K562 (cell line): ENCODE measurements at regions of chr5 and their contacts with region 1.

Region 1: GRCh38 chr5:32613050-32613672 is 27.8 kb downstream of the SUB1 start:
- DNase-seq: peak; percentile 80 to 88 (median 83)
- ATAC-seq: peak; percentile 89
- H3K4me3 ChIP-seq: no peak overlapping the region
- H3K27ac ChIP-seq: no peak overlapping the region
- H3K4me1 ChIP-seq: no peaks in the 10 kb centered on the region
- H3K27me3 ChIP-seq: no peaks in the 10 kb centered on the region; a peak in 1 of 5 replicates
- CTCF ChIP-seq: peak; percentile 91 to 97 (median 93)
- EP300 ChIP-seq: no peak
- POLR2A ChIP-seq: no peak
- RAD21 ChIP-seq: peak; percentile 94 to 95

Region 2: DNA sequence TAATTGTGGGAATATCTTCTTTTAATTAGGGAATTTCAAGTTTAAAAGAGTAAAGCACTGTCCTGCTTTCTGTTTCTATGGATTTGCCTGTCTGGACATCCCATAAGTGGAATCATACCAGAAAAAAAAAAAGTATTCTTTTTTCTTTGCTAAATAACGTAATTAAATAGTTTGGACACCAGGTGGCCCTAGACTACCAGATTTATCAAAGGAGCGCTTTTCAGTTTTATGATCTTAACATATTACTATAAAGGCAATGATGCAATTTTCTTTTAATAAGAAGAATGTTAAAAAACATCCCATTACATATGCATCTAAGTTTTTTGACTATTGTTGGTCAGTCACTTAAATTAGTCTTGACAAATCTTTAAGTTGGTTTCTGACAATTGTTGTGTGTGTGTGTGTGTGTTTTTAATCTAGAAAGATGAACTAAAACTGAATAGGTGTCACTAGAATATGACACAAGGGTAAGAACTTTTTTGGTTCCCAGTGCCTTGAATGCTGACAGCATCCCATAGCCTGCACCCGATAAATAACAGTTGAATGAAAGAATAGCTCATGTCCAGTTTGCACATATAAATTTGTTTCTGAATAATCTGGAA is 1031.6 kb before region 1 on chr5:
- CTCF ChIA-PET with region 1: interaction called, 3 read pairs
- POLR2A ChIA-PET with region 1: no interaction called
- in situ Hi-C with region 1: loop called (anchors 25 kb)
- intact Hi-C with region 1: no loop called
- DNase-seq: peak in 3 of 4 experiments; percentile 31 to 52 (median 33)
- ATAC-seq: peak; percentile 51; the same call in 1 of the 3 replicates
- H3K4me3 ChIP-seq: no peak overlapping the region
- H3K27ac ChIP-seq: no peak overlapping the region
- H3K4me1 ChIP-seq: no peaks in the 10 kb centered on the region
- H3K27me3 ChIP-seq: peaks cover 0 to 5% of the 10 kb centered on the region in 2 experiments; a peak in 2 of 5 replicates
- CTCF ChIP-seq: peak; percentile 20 to 79 (median 51); a peak in 3 of 6 replicates
- EP300 ChIP-seq: no peak
- POLR2A ChIP-seq: no peak
- RAD21 ChIP-seq: peak; percentile 83 to 87

Region 3: GRCh38 chr5:31825518-31826068 is 787.6 kb before region 1 on chr5:
- CTCF ChIA-PET with region 1: interaction called, 6 read pairs
- POLR2A ChIA-PET with region 1: no interaction called
- in situ Hi-C with region 1: no loop called
- intact Hi-C with region 1: loop called (anchors 10 kb)
- DNase-seq: peak in 3 of 4 experiments; percentile 22 to 63 (median 30)
- ATAC-seq: peak; percentile 94
- H3K4me3 ChIP-seq: no peak overlapping the region
- H3K27ac ChIP-seq: no peak overlapping the region
- H3K4me1 ChIP-seq: no peaks in the 10 kb centered on the region
- H3K27me3 ChIP-seq: no peaks in the 10 kb centered on the region; a peak in 1 of 5 replicates
- CTCF ChIP-seq: peak; percentile 51 to 81 (median 68); a peak in 5 of 6 replicates
- EP300 ChIP-seq: no peak
- POLR2A ChIP-seq: no peak
- RAD21 ChIP-seq: peak; percentile 32 to 78; a peak in 3 of 4 replicates

Region 4: DNA sequence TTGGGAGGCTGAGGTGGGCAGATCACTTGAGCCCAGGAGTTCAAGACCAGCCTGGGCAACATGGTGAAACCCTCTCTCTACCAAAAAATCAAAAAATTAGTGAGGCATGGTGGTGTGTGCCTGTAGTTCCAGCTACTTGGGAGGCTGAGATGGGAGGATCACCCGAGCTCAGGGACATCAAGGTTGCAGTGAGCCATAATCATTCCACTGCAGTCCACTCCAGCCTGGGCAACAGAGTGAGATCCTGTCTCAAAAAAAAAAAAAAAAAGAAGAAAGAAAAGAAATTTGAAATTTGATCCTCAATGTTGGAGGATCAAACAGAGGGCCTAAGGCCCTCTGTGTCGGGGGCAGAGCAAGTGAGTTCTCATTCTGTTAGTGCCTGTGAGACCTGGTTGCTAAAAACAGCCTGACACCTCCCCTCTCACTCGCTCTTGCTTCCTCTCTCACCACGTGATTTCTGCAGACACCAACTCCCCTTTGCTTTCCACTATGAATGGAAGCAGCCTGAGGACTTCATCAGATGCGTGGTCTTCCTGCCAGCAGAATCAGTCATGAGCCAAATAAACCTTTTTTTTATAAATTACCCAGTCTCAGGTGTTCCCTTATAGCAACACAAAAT is 430.6 kb before region 1 on chr5:
- CTCF ChIA-PET with region 1: no interaction called
- POLR2A ChIA-PET with region 1: no interaction called
- in situ Hi-C with region 1: no loop called
- intact Hi-C with region 1: no loop called
- DNase-seq: no peak
- ATAC-seq: peak; percentile 50
- H3K4me3 ChIP-seq: no peak overlapping the region
- H3K27ac ChIP-seq: no peak overlapping the region
- H3K4me1 ChIP-seq: no peaks in the 10 kb centered on the region
- H3K27me3 ChIP-seq: no peaks in the 10 kb centered on the region
- CTCF ChIP-seq: no peak
- EP300 ChIP-seq: no peak
- POLR2A ChIP-seq: no peak
- RAD21 ChIP-seq: no peak

Region 5: GRCh38 chr5:32223946-32224608 is 389.1 kb before region 1 on chr5:
- CTCF ChIA-PET with region 1: no interaction called
- POLR2A ChIA-PET with region 1: no interaction called
- in situ Hi-C with region 1: loop called (anchors 10 kb)
- intact Hi-C with region 1: no loop called
- DNase-seq: no peak
- ATAC-seq: no peak
- H3K4me3 ChIP-seq: no peak overlapping the region
- H3K27ac ChIP-seq: no peak overlapping the region
- H3K4me1 ChIP-seq: no peaks in the 10 kb centered on the region
- H3K27me3 ChIP-seq: no peaks in the 10 kb centered on the region
- CTCF ChIP-seq: no peak
- EP300 ChIP-seq: no peak
- POLR2A ChIP-seq: no peak
- RAD21 ChIP-seq: no peak

Region 6: GRCh38 chr5:32339198-32339597 is 274.0 kb before region 1 on chr5:
- CTCF ChIA-PET with region 1: no interaction called
- POLR2A ChIA-PET with region 1: no interaction called
- in situ Hi-C with region 1: no loop called
- intact Hi-C with region 1: loop called (anchors 10 kb)
- DNase-seq: peak in 1 of 4 experiments; percentile 41
- ATAC-seq: no peak
- H3K4me3 ChIP-seq: no peak overlapping the region
- H3K27ac ChIP-seq: no peak overlapping the region
- H3K4me1 ChIP-seq: no peaks in the 10 kb centered on the region
- H3K27me3 ChIP-seq: no peaks in the 10 kb centered on the region; a peak in 1 of 5 replicates
- CTCF ChIP-seq: no peak
- EP300 ChIP-seq: no peak
- POLR2A ChIP-seq: no peak
- RAD21 ChIP-seq: no peak

Region 7: DNA sequence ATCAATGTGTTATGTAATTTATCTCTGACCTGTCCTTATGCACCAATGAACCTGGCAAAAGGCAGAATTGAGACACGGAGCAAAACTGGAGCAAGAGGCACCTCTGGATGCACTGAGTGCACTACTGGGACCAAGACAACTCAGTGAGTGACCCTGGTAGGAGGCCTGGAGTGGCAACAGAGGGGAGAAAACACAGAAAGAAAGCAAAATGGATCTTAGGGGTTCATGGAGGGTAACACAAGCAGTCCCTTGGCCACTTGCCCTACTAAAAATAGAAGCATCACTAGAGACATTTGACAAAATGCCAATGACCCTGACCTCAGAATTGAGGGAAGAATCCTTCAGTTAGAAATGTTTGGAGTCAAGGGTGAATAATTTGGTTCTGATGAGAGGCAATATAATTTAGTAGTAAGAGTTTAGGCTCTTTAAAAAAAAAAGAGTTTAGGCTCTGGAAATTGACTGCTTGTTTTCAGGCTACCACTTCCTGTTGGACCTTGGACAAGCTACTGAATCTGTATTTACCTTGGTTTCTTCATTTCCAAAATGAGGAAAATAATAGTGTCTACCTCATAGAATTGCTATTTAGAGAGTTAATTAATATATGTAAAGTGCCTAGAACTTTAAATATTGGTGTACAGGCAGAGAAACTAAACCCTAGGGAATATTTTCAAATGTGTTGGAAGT is 592.7 kb after region 1 on chr5:
- CTCF ChIA-PET with region 1: no interaction called
- POLR2A ChIA-PET with region 1: no interaction called
- in situ Hi-C with region 1: no loop called
- intact Hi-C with region 1: no loop called
- DNase-seq: no peak
- ATAC-seq: no peak
- H3K4me3 ChIP-seq: no peak overlapping the region
- H3K27ac ChIP-seq: no peak overlapping the region
- H3K4me1 ChIP-seq: no peaks in the 10 kb centered on the region
- H3K27me3 ChIP-seq: no peaks in the 10 kb centered on the region
- CTCF ChIP-seq: no peak
- EP300 ChIP-seq: no peak
- POLR2A ChIP-seq: no peak
- RAD21 ChIP-seq: no peak